SK-N-SH (cell line): ENCODE measurements at regions of chr12 and their contacts with region 1.

Region 1: GRCh38 chr12:3034067-3034750 is 43.0 kb upstream of the TSPAN9 start:
- DNase-seq: peak; percentile 92
- H3K4me3 ChIP-seq: no peak overlapping the region; a peak in 1 of 4 replicates
- H3K27ac ChIP-seq: no peak overlapping the region
- H3K4me1 ChIP-seq: peaks cover 0 to 5% of the 10 kb centered on the region in 2 experiments; a peak in 1 of 4 replicates
- H3K27me3 ChIP-seq: no peaks in the 10 kb centered on the region
- CTCF ChIP-seq: peak; percentile 74
- EP300 ChIP-seq: no peak
- RAD21 ChIP-seq: peak; percentile 80

Region 2: DNA sequence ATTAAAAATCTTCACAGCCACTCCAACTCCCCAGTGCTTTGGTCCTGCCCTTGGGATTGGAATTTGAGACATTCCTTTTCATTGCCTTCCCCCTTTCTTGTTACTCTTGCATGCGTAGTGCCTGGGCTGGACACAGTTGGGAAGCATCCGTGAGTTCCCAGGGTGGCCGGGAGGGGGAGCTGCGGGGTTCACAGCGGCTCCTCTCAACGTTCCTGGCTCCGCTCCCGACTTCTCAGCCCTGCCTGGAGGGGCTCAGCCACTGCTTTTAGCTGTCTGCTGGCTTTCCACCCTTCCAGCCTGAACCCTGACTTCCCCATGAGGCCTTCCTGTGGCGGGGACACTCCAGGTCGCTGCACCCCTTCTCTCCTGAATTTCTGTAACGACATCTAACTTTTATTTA is 180.6 kb before region 1 on chr12:
- CTCF ChIA-PET with region 1: interaction called, 30 read pairs
- POLR2A ChIA-PET with region 1: no interaction called
- DNase-seq: peak; percentile 93
- H3K4me3 ChIP-seq: no peak overlapping the region; a peak in 1 of 4 replicates
- H3K27ac ChIP-seq: no peak overlapping the region
- H3K4me1 ChIP-seq: no peaks in the 10 kb centered on the region
- H3K27me3 ChIP-seq: no peaks in the 10 kb centered on the region
- CTCF ChIP-seq: peak; percentile 89
- EP300 ChIP-seq: no peak
- RAD21 ChIP-seq: peak; percentile 64

Region 3: GRCh38 chr12:2884810-2885209 is 149.4 kb before region 1 on chr12:
- CTCF ChIA-PET with region 1: interaction called, 35 read pairs
- POLR2A ChIA-PET with region 1: interaction called, 8 read pairs
- DNase-seq: no peak
- H3K4me3 ChIP-seq: no peak overlapping the region
- H3K27ac ChIP-seq: no peak overlapping the region
- H3K4me1 ChIP-seq: 0 out of 4 replicates have a peak, but pooled peaks cover 0 to under 1% of the 10 kb centered on the region in 2 experiments
- H3K27me3 ChIP-seq: no peaks in the 10 kb centered on the region
- CTCF ChIP-seq: no peak
- EP300 ChIP-seq: no peak
- RAD21 ChIP-seq: no peak

Region 4: GRCh38 chr12:3004655-3005565 is 29.3 kb before region 1 on chr12:
- CTCF ChIA-PET with region 1: interaction called, 19 read pairs
- POLR2A ChIA-PET with region 1: no interaction called
- DNase-seq: peak; percentile 85
- H3K4me3 ChIP-seq: no peak overlapping the region
- H3K27ac ChIP-seq: peak overlapping the region in 1 of 2 experiments; percentile 48; a peak in 2 of 4 replicates
- H3K4me1 ChIP-seq: peaks cover 0 to 20% of the 10 kb centered on the region in 2 experiments; a peak in 1 of 4 replicates
- H3K27me3 ChIP-seq: no peaks in the 10 kb centered on the region
- CTCF ChIP-seq: peak; percentile 50
- EP300 ChIP-seq: no peak
- RAD21 ChIP-seq: peak; percentile 33; the same call in 1 of the 2 replicates

Region 5: GRCh38 chr12:3020850-3021435 is 13.3 kb before region 1 on chr12:
- CTCF ChIA-PET with region 1: interaction called, 13 read pairs
- POLR2A ChIA-PET with region 1: no interaction called
- DNase-seq: no peak
- H3K4me3 ChIP-seq: no peak overlapping the region
- H3K27ac ChIP-seq: no peak overlapping the region
- H3K4me1 ChIP-seq: no peaks in the 10 kb centered on the region
- H3K27me3 ChIP-seq: no peaks in the 10 kb centered on the region
- CTCF ChIP-seq: no peak
- EP300 ChIP-seq: no peak
- RAD21 ChIP-seq: no peak